HepG2 (cell line): ENCODE measurements at regions of chr12 and their contacts with region 1.

Region 1: GRCh38 chr12:31682136-31682962 is 22.9 kb downstream of the ETFBKMT start:
- DNase-seq: peak; percentile 81
- ATAC-seq: peak; percentile 92
- H3K4me3 ChIP-seq: no peak overlapping the region
- H3K27ac ChIP-seq: no peak overlapping the region
- H3K4me1 ChIP-seq: no peaks in the 10 kb centered on the region
- H3K27me3 ChIP-seq: no peaks in the 10 kb centered on the region
- CTCF ChIP-seq: peak; percentile 90
- EP300 ChIP-seq: no peak
- POLR2A ChIP-seq: no peak
- RAD21 ChIP-seq: peak; percentile 95

Region 2: GRCh38 chr12:31914927-31915326 is 232.6 kb after region 1 on chr12:
- CTCF ChIA-PET with region 1: no interaction called
- POLR2A ChIA-PET with region 1: no interaction called
- in situ Hi-C with region 1: no loop called
- intact Hi-C with region 1: loop called (anchors 5 kb)
- DNase-seq: no peak
- ATAC-seq: no peak
- H3K4me3 ChIP-seq: no peak overlapping the region
- H3K27ac ChIP-seq: no peak overlapping the region
- H3K4me1 ChIP-seq: no peaks in the 10 kb centered on the region
- H3K27me3 ChIP-seq: no peaks in the 10 kb centered on the region
- CTCF ChIP-seq: no peak
- EP300 ChIP-seq: no peak
- POLR2A ChIP-seq: no peak
- RAD21 ChIP-seq: no peak

Region 3: GRCh38 chr12:32051559-32052414 is 369.4 kb after region 1 on chr12:
- CTCF ChIA-PET with region 1: no interaction called
- POLR2A ChIA-PET with region 1: no interaction called
- in situ Hi-C with region 1: no loop called
- intact Hi-C with region 1: loop called (anchors 5 kb)
- DNase-seq: no peak
- ATAC-seq: peak; percentile 52; the same call in 2 of the 3 replicates
- H3K4me3 ChIP-seq: no peak overlapping the region
- H3K27ac ChIP-seq: no peak overlapping the region
- H3K4me1 ChIP-seq: peaks cover 31% of the 10 kb centered on the region
- H3K27me3 ChIP-seq: no peaks in the 10 kb centered on the region
- CTCF ChIP-seq: no peak
- EP300 ChIP-seq: no peak
- POLR2A ChIP-seq: no peak
- RAD21 ChIP-seq: no peak